HEK293T (cell line): ENCODE measurements at regions of chr13 and their contacts with region 1.

Region 1: GRCh38 chr13:37047032-37047431 is 12.5 kb downstream of the SUPT20H start:
- DNase-seq: peak; percentile 50

Region 2: GRCh38 chr13:36999054-36999714 is 47.8 kb before region 1 on chr13 and contains the start of gene ALG5:
- CTCF ChIA-PET with region 1: no interaction called
- POLR2A ChIA-PET with region 1: interaction called, 16 read pairs
- DNase-seq: peak; percentile 85

Region 3: DNA sequence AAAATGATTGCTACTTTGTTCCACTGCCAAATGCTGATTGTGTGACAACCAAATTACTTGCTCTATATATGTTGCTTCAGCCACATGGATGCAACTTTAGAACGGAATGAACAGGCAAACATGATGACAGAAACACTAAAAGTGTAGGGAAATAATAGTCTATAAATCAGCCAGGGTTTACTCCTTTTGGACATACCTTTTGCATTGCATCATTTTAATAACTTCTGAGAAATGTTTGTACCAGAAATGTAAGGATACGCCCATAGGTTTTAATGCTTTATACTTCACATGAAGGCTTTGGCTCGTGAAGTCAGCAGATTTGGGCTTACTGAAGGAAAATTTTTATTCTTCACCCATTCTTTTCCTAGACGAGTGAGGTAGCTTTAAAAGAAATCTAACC is 410.6 kb after region 1 on chr13:
- CTCF ChIA-PET with region 1: no interaction called
- POLR2A ChIA-PET with region 1: no interaction called
- DNase-seq: no peak